Cardiac septum (tissue), 1 donor: ENCODE measurements at regions of chr7 and their contacts with region 1.

Region 1: DNA sequence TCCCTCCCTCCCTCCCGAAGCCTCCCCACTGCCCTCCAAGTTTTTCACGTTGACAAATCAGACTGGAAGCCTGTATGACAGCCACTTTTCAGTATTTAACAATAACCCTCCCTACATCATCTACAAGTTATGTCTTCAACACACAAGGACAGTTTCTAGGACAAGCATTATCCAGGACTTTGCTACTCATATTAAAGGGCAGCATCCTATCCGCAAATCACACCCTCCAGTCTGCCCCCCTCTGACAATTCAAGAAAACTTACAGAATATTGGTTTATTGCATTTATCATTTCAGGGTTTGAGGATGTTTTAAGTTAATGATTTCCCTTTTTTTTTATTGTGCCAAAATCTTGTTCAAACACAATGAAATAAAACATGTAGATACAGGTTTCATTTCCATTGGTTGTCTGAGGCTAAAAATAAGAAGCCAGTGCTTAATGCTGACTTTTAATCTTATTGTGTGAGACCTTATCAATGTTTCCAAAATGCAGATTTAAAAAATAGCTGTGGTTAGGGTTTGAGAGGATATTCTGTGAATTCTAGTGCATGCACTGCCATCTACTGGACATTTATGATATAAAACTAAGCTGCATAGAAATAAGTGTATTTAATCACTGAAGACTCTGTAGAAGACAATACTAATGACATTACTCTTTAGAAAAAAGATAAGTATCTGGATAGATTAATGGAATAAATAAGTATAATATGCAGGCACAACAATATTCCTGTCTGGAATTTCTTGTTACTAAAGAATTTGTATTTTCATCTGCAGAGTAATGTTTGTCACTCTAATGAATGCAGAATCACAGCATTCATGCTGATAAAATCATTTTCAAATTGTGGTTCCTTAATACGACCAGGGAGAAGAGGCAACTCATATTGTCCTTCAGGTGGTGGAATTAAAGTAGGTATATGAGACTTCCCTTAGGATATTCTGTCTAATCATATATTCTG is 64.1 kb downstream of the CAV1 start:
- DNase-seq: no peak

Region 2: GRCh38 chr7:116180302-116180701 is 408.6 kb before region 1 on chr7:
- intact Hi-C with region 1: loop called (anchors 2 kb)
- DNase-seq: no peak

Region 3: GRCh38 chr7:116258734-116259133 is 330.2 kb before region 1 on chr7:
- intact Hi-C with region 1: loop called (anchors 1 kb)
- DNase-seq: no peak

Region 4: GRCh38 chr7:116354546-116355408 is 234.1 kb before region 1 on chr7:
- intact Hi-C with region 1: loop called (anchors 1 kb)
- DNase-seq: peak; percentile 83

Region 5: DNA sequence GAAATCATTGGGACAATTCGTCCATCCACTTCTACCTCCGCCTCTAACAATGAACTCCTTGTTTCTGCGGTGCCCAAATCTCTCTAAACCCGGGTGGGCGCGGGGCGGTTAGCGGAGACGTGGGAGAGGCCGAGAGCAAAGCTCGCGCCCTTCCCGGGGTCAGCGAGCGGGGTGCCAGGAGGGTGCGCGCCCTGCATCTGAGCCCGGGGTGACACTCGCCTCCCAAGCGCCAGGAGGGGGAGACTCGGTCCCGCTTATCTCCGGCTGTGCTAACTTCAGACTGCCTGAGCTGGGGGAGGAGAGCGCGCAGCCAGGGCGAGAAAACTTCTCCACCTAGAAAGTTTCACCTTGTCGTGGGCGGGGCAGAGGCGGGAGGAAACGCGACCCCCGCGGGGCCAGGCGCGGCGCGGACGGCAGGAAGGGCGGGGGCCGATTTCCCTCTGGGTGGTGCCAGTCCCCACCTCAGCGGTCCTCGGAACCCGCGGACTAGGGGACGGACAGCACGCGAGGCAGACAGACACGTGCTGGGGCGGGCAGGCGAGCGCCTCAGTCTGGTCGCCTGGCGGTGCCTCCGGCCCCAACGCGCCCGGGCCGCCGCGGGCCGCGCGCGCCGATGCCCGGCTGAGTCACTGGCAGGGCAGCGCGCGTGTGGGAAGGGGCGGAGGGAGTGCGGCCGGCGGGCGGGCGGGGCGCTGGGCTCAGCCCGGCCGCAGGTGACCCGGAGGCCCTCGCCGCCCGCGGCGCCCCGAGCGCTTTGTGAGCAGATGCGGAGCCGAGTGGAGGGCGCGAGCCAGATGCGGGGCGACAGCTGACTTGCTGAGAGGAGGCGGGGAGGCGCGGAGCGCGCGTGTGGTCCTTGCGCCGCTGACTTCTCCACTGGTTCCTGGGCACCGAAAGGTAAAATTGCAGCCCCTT is 83.0 kb after region 1 on chr7 and contains the start of gene MET:
- intact Hi-C with region 1: loop called (anchors 5 kb)
- DNase-seq: peak; percentile 81
- total RNA-seq, gene MET: 9.2 TPM

Region 6: GRCh38 chr7:116809636-116810266 is 220.8 kb after region 1 on chr7:
- intact Hi-C with region 1: loop called (anchors 1 kb)
- DNase-seq: no peak